Endothelial cell of umbilical vein (primary cell): ENCODE measurements at regions of chr1 and their contacts with region 1.

Region 1: GRCh38 chr1:234978397-234979295 is 150.0 kb downstream of the TOMM20 start:
- DNase-seq: peak; percentile 86
- H3K4me3 ChIP-seq: no peak overlapping the region
- H3K27ac ChIP-seq: peak overlapping the region; percentile 88
- H3K4me1 ChIP-seq: peaks cover 69% of the 10 kb centered on the region
- H3K27me3 ChIP-seq: no peaks in the 10 kb centered on the region
- CTCF ChIP-seq: no peak
- POLR2A ChIP-seq: no peak

Region 2: GRCh38 chr1:234925440-234926263 is 53.0 kb before region 1 on chr1:
- CTCF ChIA-PET with region 1: interaction called, 12 read pairs
- POLR2A ChIA-PET with region 1: no interaction called
- dilution Hi-C with region 1: no loop called
- intact Hi-C with region 1: loop called (anchors 1 kb)
- DNase-seq: peak; percentile 94
- H3K4me3 ChIP-seq: no peak overlapping the region
- H3K27ac ChIP-seq: peak overlapping the region; percentile 90
- H3K4me1 ChIP-seq: peaks cover 41% of the 10 kb centered on the region
- H3K27me3 ChIP-seq: no peaks in the 10 kb centered on the region
- CTCF ChIP-seq: no peak
- POLR2A ChIP-seq: no peak

Region 3: GRCh38 chr1:234962340-234962989 is 16.2 kb before region 1 on chr1:
- CTCF ChIA-PET with region 1: interaction called, 4 read pairs
- POLR2A ChIA-PET with region 1: no interaction called
- dilution Hi-C with region 1: no loop called
- intact Hi-C with region 1: loop called (anchors 2 kb)
- DNase-seq: no peak
- H3K4me3 ChIP-seq: no peak overlapping the region
- H3K27ac ChIP-seq: peak overlapping the region; percentile 3
- H3K4me1 ChIP-seq: peaks cover 34% of the 10 kb centered on the region
- H3K27me3 ChIP-seq: no peaks in the 10 kb centered on the region
- CTCF ChIP-seq: no peak
- POLR2A ChIP-seq: no peak

Region 4: GRCh38 chr1:235045034-235045720 is 66.5 kb after region 1 on chr1:
- CTCF ChIA-PET with region 1: no interaction called
- POLR2A ChIA-PET with region 1: no interaction called
- dilution Hi-C with region 1: no loop called
- intact Hi-C with region 1: no loop called
- DNase-seq: no peak
- H3K4me3 ChIP-seq: no peak overlapping the region
- H3K27ac ChIP-seq: no peak overlapping the region
- H3K4me1 ChIP-seq: peaks cover 14% of the 10 kb centered on the region
- H3K27me3 ChIP-seq: no peaks in the 10 kb centered on the region
- CTCF ChIP-seq: no peak
- POLR2A ChIP-seq: no peak